ENCODE measurements at regions of chr4 and their contacts with region 1.

Region 1: GRCh38 chr4:164012396-164013027 is 518.0 kb downstream of the TMA16 start:
- DNase-seq: peak; percentile 23
- H3K4me3 ChIP-seq: no peak overlapping the region
- CTCF ChIP-seq: peak; percentile 72

Region 2: GRCh38 chr4:163554870-163555465 is 457.5 kb before region 1 on chr4:
- in situ Hi-C with region 1: loop called (anchors 25 kb)
- DNase-seq: no peak
- H3K4me3 ChIP-seq: no peak overlapping the region
- CTCF ChIP-seq: peak; percentile 33

Region 3: GRCh38 chr4:163948920-163949455 is 63.5 kb before region 1 on chr4:
- in situ Hi-C with region 1: no loop called
- DNase-seq: no peak
- H3K4me3 ChIP-seq: no peak overlapping the region
- CTCF ChIP-seq: no peak

Region 4: DNA sequence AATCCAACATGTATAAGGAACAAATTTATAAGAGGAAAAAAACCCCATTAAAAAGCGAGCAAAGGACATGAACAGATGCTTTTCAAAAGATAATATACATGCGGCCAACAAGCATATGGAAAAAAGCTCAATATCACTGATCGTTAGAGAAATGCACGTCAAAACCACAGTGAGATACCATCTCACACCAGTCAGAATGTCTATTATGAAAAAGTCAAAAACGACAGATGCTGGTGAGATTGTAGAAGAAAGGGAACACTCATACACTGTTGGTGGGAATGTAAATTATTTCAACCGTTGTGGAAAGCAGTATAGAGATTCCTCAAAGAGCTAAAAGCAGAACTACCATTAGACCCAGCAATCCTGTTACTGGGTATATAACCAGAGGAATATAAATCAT is 52.6 kb before region 1 on chr4:
- in situ Hi-C with region 1: no loop called
- DNase-seq: no peak
- H3K4me3 ChIP-seq: no peak overlapping the region
- CTCF ChIP-seq: no peak

Region 5: DNA sequence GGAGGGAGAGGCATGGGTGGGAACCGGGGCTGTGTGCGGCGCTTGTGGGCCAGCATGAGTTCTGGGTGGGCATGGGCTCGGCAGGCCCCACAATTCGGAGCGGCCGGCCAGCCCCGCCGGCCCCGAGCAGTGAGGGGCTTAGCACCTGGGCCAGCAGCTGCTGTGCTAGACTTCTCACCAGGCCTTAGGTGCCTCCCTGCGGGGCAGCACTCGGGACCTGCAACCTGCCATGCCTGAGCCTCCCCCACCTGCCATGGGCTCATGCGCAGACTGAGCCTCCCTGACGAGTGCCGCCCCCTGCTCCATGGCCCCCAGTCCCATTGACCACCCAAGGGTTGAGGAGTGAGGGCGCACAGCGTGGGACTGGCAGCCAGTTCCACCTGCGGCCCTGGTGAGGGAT is 55.9 kb after region 1 on chr4:
- in situ Hi-C with region 1: no loop called
- DNase-seq: no peak
- H3K4me3 ChIP-seq: no peak overlapping the region
- CTCF ChIP-seq: no peak